Heart right ventricle (tissue), 16 donors: ENCODE measurements at regions of chr12 and their contacts with region 1.

Region 1: DNA sequence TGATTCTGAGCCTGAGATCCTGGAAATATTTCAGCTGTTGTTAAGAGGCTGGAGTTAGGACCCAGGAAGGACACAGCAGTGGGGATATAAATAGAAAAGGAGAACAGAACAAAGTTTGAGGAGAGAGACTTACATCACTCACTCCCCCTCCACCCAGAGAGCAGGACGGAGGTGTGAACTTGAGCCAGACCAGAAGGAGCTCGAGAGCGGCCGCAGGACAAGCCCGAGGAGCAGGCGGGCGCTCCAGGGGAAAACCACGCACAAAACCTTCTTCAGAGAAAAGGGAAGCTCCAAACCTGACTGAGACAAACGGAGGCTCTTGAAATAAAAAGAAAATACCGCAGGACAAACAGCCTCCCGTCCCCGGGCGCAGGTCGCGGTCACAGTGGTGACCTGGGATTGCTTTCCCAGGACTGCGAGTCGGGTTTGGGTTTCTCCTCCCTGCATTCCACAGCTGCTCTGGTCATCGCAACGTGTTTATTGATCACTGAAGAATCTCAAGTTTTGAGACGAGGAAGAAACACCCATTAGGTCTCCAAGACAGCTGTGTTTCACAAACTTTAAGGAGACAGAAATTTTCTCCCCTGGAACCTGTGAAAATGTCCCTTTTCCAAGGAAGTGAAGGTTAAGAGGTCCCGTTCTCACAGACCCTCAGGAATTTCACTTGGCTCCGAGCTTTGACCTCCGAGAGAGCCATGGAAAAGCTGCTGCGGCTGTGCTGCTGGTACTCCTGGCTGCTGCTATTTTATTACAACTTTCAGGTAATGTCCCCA is at the start of gene ADGRD1:
- DNase-seq: peak; percentile 54 to 77
- ATAC-seq: peak; percentile 79 to 94 (median 90)
- H3K4me3 ChIP-seq: peak within 1 kb of the TSS; percentile 55 to 72 (median 63)
- H3K27ac ChIP-seq: peak within 1 kb of the TSS; percentile 59 to 87 (median 79)
- H3K4me1 ChIP-seq: peaks cover 0 to 42% (median 31%) of the 10 kb centered on the region in 9 donors
- H3K27me3 ChIP-seq: no peaks in the 10 kb centered on the region
- CTCF ChIP-seq: no peak
- total RNA-seq, gene ADGRD1: 29.7 to 157 (median 72.6) TPM

Region 2: DNA sequence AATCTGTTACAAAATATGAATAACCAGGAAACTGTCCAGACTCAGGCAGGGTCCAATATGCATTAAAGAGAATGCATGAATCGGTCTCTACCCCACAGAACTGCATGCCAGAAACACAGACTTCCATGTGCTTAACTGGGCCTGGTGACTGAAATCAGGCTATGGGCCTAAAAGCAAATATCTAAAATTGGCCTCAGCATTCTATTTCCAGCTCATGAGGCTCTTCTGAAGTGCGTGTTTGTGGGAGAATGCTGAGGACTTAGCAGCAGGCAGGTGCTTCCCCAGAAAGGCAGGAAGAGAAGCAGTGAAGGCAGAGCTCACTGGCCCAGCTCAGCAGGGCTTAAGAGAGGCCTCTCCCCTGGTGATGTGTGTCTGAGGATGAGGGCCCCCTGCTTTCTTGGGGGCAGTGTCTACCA is 48.3 kb after region 1 on chr12:
- intact Hi-C with region 1: loop called in 3 of 10 experiments (anchors 5 kb)
- DNase-seq: no peak
- ATAC-seq: peak; percentile 18 to 84 (median 67)
- H3K4me3 ChIP-seq: no peak overlapping the region
- H3K27ac ChIP-seq: peak overlapping the region; percentile 18 to 86 (median 70)
- H3K4me1 ChIP-seq: peaks cover 0 to 40% (median 29%) of the 10 kb centered on the region in 9 donors
- H3K27me3 ChIP-seq: no peaks in the 10 kb centered on the region
- CTCF ChIP-seq: no peak

Region 3: GRCh38 chr12:131018808-131019397 is 64.9 kb after region 1 on chr12:
- intact Hi-C with region 1: loop called in 1 of 10 experiments (anchors 5 kb)
- DNase-seq: no peak
- ATAC-seq: no peak
- H3K4me3 ChIP-seq: no peak overlapping the region
- H3K27ac ChIP-seq: peak overlapping the region in 1 of 10 donors; percentile 14
- H3K4me1 ChIP-seq: peaks cover 0 to 4% (median 0%) of the 10 kb centered on the region in 9 donors
- H3K27me3 ChIP-seq: no peaks in the 10 kb centered on the region
- CTCF ChIP-seq: peak in 1 of 9 donors; percentile 12

Region 4: GRCh38 chr12:131028615-131029338 is 74.8 kb after region 1 on chr12:
- intact Hi-C with region 1: loop called in 1 of 10 experiments (anchors 5 kb)
- DNase-seq: peak in 1 of 2 donors; percentile 46
- ATAC-seq: peak in 7 of 8 donors; percentile 34 to 84 (median 50)
- H3K4me3 ChIP-seq: no peak overlapping the region
- H3K27ac ChIP-seq: peak overlapping the region in 2 of 10 donors; percentile 51 to 70
- H3K4me1 ChIP-seq: peaks cover 0 to 3% (median 0%) of the 10 kb centered on the region in 9 donors
- H3K27me3 ChIP-seq: no peaks in the 10 kb centered on the region
- CTCF ChIP-seq: no peak